ENCODE measurements at regions of chr4 and their contacts with region 1.

Region 1: DNA sequence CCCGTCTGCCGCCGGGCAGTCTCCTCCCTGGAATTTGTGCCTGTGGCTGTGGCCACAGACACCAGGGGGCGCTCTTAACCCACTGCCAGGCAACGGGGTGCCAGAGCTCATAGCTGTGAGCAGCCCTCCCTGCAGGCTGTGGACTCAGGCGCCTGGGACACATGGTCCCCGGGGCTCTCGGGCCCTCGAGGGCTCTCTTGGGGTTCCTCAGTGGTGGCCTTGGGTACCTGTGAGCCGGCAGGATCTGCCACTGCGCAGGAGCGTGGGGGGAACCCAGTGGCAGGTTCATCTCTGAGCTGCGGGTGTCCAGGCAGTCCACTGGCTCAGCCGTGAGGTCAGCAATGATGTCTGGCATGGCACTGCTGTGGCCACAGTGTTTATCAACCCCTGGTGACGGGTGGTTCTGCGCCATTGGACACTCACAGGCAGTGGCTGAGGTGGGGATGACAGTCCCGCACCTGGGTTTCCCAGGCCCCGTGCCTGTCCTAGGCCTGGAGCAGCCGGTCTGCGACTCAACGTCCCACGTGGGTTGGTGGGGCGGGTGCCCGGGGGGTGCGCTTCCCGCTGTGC is 37.2 kb downstream of the PCGF3 start:
- DNase-seq: peak; percentile 90
- CTCF ChIP-seq: peak; percentile 92

Region 2: DNA sequence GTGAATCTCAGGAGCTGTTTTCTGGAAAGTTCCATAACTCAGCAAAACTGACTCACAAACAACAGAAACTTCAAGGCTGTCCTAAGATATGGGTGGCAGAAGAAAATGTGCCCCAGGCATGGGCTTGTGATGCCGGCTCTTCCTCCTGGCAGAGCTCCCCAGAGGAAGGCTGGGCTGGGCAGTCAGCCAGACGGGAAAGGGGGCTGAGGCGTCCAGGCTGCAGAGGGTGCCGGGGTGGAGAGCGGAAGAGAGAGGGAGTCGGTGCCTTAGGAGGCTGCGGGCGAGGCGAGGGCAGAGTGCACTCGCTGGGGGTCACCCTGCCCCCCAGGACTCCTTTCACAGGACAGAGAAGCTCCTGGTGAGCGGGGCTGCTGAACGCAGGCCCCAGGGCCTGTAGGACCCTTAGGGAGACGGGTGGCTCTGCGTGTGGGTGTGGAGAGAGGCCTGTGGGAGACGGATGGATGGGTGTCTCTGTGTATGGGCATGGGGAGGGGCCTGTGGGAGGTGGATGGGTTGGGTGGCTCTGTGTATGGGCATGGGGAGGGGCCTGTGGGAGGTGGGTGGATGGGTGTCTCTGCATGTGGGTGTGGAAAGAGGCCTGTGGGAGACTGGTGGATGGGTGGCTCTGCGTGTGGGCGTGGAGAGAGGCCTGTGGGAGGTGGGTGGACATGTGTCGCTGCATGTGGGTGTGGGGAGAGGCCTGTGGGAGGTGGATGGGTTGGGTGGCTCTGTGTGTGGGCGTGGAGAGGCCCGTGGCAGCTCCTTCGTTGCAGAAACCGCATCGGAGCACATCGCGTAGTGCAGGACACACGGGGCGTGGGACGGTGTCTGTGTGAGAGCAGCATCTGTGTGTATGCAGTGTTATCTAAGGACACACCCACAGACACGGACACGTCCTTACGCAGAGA is 21.3 kb before region 1 on chr4:
- CTCF ChIA-PET with region 1: interaction called, 15 read pairs
- POLR2A ChIA-PET with region 1: no interaction called
- DNase-seq: no peak
- CTCF ChIP-seq: no peak

Region 3: GRCh38 chr4:727576-727975 is 15.3 kb before region 1 on chr4:
- CTCF ChIA-PET with region 1: interaction called, 11 read pairs
- POLR2A ChIA-PET with region 1: no interaction called
- DNase-seq: no peak
- CTCF ChIP-seq: no peak

Region 4: DNA sequence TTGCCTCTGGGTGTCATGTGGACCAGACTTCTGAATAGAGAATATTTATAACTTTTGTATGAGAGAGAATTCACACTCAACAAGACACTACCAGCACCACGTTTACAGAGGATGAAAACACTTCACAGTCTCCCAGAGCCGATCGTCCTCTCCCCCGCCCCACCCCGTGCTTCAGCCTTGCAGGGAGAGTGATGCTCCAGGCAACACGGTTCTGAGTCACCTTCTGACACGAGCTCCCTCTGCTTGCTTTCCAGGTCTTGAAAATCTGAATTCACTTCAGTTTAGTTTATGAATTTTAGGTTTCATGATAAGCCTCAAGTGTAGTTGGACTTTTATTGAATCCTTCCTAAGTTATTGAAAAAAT is 23.3 kb after region 1 on chr4:
- CTCF ChIA-PET with region 1: interaction called, 28 read pairs
- POLR2A ChIA-PET with region 1: no interaction called
- DNase-seq: no peak
- CTCF ChIP-seq: no peak

Region 5: GRCh38 chr4:781493-782216 is 38.8 kb after region 1 on chr4:
- CTCF ChIA-PET with region 1: interaction called, 18 read pairs
- POLR2A ChIA-PET with region 1: no interaction called
- DNase-seq: peak; percentile 99
- CTCF ChIP-seq: no peak

Region 6: DNA sequence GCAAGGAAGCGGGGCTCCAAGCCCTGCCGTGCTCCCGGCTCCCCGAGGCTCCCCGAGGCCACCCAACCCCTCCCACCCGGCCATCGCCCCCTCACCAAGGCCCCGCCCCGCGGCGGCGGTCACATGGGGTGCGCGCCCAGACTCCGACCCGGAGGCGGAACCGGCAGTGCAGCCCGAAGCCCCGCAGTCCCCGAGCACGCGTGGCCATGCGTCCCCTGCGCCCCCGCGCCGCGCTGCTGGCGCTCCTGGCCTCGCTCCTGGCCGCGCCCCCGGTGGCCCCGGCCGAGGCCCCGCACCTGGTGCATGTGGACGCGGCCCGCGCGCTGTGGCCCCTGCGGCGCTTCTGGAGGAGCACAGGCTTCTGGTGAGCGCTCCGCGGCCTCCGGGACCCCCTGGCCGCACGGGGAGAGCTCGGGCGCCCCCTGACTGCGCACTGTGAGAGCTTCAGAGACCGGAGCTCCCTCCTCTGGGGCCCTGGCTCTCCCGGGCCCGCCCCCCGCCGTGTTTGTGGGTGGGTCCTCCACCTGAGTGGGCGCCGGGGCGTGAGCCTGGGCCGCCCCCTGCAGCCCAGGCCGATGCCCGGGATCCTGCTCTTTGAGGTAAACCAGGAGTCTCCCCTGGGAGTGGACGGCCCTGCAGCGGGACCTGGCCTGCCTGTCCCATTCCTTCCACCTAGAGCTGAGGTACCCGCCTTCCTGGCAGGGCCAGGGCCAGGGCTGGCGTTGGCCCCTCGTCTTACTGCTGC is 244.2 kb after region 1 on chr4 and contains the start of gene IDUA:
- CTCF ChIA-PET with region 1: interaction called, 43 read pairs
- POLR2A ChIA-PET with region 1: no interaction called
- DNase-seq: peak; percentile 92
- CTCF ChIP-seq: peak; percentile 67

Measured in GM10248 (cell line).